Left colon (tissue), 2 donors: ENCODE measurements at regions of chr9 and their contacts with region 1.

Region 1: DNA sequence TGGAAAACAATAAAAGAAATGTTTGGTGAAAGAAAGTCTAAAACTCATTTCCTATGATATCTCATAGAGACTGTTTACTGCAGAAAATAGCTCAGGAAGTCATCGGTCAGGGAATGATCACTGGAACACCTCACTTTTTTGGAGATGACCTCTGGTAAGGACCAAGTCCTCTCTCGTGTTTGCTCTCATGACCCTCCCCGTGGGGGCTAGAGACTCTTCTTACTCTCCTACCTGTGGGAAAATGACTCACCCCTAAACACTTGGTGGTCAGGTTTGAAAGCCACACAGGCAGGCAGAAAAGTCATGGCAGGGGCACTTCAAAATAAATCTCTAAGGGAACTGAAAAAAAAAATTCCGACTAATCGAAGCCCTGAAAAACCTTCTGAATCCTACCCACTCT is 48.2 kb downstream of the FAM240B start:
- DNase-seq: no peak
- ATAC-seq: no peak

Region 2: GRCh38 chr9:38489057-38489456 is 182.7 kb before region 1 on chr9:
- intact Hi-C with region 1: no loop called
- DNase-seq: no peak
- ATAC-seq: no peak

Region 3: GRCh38 chr9:38620483-38621433 is 51.0 kb before region 1 on chr9 and contains the start of gene ANKRD18A:
- intact Hi-C with region 1: loop called in 1 of 2 experiments (anchors 5 kb)
- DNase-seq: peak; percentile 88 to 92
- ATAC-seq: peak; percentile 85
- total RNA-seq, gene ANKRD18A: 12.2 to 12.3 TPM

Region 4: GRCh38 chr9:38771593-38771992 is 99.8 kb after region 1 on chr9:
- intact Hi-C with region 1: no loop called
- DNase-seq: no peak
- ATAC-seq: no peak